Activated CD4-positive, alpha-beta T cell treated with anti-CD3 and anti-CD28 coated beads for 36 hours (primary cell): ENCODE measurements at regions of chr10 and their contacts with region 1.

Region 1: GRCh38 chr10:101353692-101354327 is at the start of gene BTRC:
- DNase-seq: peak; percentile 97
- ATAC-seq: peak; percentile 98
- H3K4me3 Mint-ChIP-seq: peak within 1 kb of the TSS; percentile 91
- H3K27ac Mint-ChIP-seq: peak within 1 kb of the TSS; percentile 94
- H3K4me1 Mint-ChIP-seq: peaks cover 27% of the 10 kb centered on the region
- H3K27me3 Mint-ChIP-seq: peaks cover 12% of the 10 kb centered on the region
- total RNA-seq, gene BTRC: 15.5 to 18.7 TPM

Region 2: GRCh38 chr10:101042667-101043355 is 311.0 kb before region 1 on chr10:
- CTCF ChIA-PET with region 1: no interaction called
- POLR2A ChIA-PET with region 1: no interaction called
- intact Hi-C with region 1: loop called in 1 of 2 experiments (anchors 5 kb)
- DNase-seq: peak; percentile 96
- ATAC-seq: peak; percentile 96
- H3K4me3 Mint-ChIP-seq: peak overlapping the region; percentile 79
- H3K27ac Mint-ChIP-seq: peak overlapping the region; percentile 79
- H3K4me1 Mint-ChIP-seq: peaks cover 21% of the 10 kb centered on the region
- H3K27me3 Mint-ChIP-seq: peaks cover 14% of the 10 kb centered on the region

Region 3: DNA sequence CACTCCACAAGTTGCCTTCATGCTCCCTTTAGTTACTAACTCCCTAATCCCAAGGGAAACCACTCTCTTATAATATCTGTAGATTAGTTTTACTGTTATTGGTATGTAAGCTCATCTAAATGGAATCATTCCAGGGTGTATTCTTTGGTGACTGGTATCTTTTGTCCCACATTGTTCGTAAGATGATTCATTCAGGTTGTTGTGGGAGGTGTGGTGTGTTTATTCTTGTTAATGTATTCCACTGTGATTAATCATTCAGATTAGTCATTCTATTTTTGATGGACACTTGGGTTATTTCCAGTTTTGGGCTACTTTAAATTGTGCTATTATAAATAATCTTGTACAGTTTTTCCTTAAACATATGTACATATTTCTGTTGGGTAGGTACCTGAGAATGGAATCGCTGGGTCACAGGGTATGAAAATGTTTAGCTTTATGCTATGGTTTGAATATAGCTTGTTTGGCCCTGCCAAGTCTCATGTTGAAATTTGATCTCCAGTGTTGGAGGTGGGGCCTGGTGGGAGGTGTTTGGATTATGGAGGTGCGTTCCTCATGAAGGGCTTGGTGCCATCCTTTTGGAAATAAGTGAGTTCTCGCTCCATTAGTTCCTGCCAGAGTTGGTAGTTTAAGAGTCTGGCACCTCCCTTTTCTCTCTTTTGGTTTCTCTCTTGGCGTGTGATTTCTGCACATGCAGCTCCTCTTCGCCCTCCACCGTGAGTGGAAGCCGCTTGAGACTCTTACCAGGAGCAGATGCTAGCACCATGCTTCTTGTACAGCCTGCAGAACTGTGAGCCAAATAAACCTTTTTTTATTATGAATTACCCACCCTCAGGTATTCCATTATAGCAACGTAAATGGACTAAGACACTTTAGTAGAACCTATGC is 14.0 kb after region 1 on chr10:
- CTCF ChIA-PET with region 1: interaction called, 4 read pairs
- POLR2A ChIA-PET with region 1: no interaction called
- intact Hi-C with region 1: loop called in 1 of 2 experiments (anchors 1 kb)
- DNase-seq: peak; percentile 14
- ATAC-seq: peak; percentile 85
- H3K4me3 Mint-ChIP-seq: no peak overlapping the region
- H3K27ac Mint-ChIP-seq: peak overlapping the region; percentile 14
- H3K4me1 Mint-ChIP-seq: peaks cover 21% of the 10 kb centered on the region
- H3K27me3 Mint-ChIP-seq: no peaks in the 10 kb centered on the region

Region 4: DNA sequence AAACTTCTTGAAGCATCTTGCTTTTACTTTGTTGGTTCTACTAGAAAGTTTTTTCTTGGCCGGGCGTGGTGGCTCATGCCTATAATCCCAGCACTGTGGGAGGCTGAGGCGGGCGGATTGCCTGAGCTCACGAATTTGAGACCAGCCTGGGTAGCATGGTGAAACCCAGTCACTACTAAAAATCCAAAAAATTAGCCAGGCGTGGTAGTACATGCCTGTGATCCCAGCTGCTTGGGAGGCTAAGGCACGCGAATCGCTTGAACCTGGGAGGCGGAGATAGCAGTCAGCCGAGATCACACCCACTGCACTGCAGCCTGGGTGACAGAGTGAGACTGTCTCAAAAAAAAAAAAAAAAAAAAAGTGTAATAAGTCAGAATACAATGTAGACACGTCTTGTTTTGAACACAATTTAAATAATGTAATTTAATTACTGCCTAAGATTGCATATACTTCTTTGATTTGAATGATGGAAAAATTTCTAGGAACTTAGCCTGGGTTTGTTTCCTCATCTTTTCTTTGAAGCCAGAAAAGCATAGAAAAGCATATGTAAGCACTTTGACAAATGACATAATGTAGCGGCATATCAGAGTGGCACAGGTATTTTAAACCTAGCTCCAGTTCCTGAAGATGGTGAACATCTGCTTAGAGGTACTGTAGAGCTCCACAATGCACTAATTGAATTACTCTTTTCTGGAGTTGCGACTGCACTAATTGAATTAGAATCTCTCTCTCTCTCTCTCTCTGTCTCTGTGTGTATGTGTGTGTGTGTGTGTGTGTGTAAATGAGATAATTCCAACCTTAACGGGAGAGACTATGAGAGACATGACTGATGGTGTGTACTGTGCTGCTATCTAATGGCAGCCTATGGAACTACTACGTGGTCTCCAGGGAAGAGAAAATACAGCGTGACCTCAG is 88.0 kb after region 1 on chr10:
- CTCF ChIA-PET with region 1: interaction called, 3 read pairs
- POLR2A ChIA-PET with region 1: no interaction called
- intact Hi-C with region 1: loop called (anchors 5 to 10 kb)
- DNase-seq: peak; percentile 39
- ATAC-seq: peak; percentile 95
- H3K4me3 Mint-ChIP-seq: no peak overlapping the region
- H3K27ac Mint-ChIP-seq: no peak overlapping the region
- H3K4me1 Mint-ChIP-seq: peaks cover 2% of the 10 kb centered on the region
- H3K27me3 Mint-ChIP-seq: no peaks in the 10 kb centered on the region

Region 5: GRCh38 chr10:101818119-101818871 is 464.5 kb after region 1 on chr10 and contains the start of gene OGA:
- CTCF ChIA-PET with region 1: no interaction called
- POLR2A ChIA-PET with region 1: no interaction called
- intact Hi-C with region 1: loop called in 1 of 2 experiments (anchors 1 kb)
- DNase-seq: peak; percentile 99
- ATAC-seq: peak; percentile 89
- H3K4me3 Mint-ChIP-seq: peak within 1 kb of the TSS; percentile 89
- H3K27ac Mint-ChIP-seq: peak within 1 kb of the TSS; percentile 83
- H3K4me1 Mint-ChIP-seq: peaks cover 40% of the 10 kb centered on the region
- H3K27me3 Mint-ChIP-seq: no peaks in the 10 kb centered on the region
- total RNA-seq, gene OGA: 113 to 124 TPM

Region 6: DNA sequence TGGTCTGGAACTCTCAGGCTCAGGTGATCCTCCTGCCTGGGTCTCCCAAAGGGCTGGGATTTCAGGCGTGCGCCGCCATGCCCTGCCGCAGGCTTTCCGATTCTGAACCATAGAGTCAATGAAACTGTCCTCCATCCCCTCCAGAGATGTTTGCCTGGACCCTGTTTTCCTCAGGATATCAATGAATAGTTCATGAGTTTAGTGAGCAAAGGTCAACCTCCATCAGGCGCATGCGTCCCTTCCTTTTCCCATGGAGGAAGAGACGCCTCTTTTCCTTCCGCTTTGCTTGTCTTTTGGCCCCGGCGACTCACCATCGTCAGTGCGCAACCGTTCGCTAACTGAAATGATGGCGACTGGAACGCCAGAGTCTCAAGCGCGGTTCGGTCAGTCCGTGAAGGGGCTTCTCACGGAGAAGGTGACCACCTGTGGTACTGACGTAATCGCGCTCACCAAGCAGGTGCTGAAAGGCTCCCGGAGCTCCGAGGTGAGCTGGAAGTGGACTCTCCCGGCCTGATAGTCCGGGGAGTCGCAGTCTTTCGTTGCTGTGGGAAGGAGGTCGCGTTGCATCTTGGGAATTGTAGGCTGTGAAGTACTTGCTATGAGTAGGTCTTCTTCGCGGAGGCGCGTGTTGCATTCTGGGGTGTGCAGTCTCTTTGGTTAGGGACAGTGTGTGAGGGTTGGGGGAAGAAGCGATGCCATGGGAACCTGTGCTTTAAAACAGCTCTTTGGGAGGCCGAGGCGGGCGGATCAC is 1500.3 kb after region 1 on chr10 and contains the start of gene BORCS7:
- CTCF ChIA-PET with region 1: no interaction called
- POLR2A ChIA-PET with region 1: no interaction called
- intact Hi-C with region 1: loop called in 1 of 2 experiments (anchors 5 kb)
- DNase-seq: peak; percentile 94
- ATAC-seq: peak; percentile 100
- H3K4me3 Mint-ChIP-seq: peak within 1 kb of the TSS; percentile 95
- H3K27ac Mint-ChIP-seq: peak within 1 kb of the TSS; percentile 99
- H3K4me1 Mint-ChIP-seq: peaks cover 14% of the 10 kb centered on the region
- H3K27me3 Mint-ChIP-seq: no peaks in the 10 kb centered on the region
- total RNA-seq, gene BORCS7: 4.5 to 5.1 TPM